GM10248 (cell line): ENCODE measurements at regions of chr1 and their contacts with region 1.

Region 1: GRCh38 chr1:183580281-183580682 is 10.0 kb downstream of the NCF2 start:
- DNase-seq: peak; percentile 49
- CTCF ChIP-seq: peak; percentile 27

Region 2: DNA sequence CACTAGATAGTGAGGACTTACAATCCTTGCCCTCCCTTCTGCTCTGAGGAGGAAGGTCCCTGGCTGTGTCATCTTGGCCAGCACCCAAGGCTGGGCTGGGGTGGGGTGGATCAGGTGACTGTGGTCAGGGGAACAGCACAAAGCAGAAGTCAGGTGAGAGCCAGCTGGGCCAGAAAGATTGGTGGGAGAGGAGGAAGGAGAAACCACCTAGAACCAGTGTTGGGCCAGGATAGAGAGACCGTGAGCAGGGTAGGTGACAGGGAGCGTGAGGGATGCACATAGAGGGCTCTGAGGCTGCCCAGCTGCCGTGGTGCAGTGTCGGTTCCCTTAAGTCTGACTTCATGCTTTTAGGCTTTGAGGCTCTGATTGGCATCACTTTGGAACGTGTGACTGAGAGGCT is 12.7 kb before region 1 on chr1:
- CTCF ChIA-PET with region 1: interaction called, 17 read pairs
- POLR2A ChIA-PET with region 1: no interaction called
- DNase-seq: peak; percentile 44
- CTCF ChIP-seq: no peak

Region 3: DNA sequence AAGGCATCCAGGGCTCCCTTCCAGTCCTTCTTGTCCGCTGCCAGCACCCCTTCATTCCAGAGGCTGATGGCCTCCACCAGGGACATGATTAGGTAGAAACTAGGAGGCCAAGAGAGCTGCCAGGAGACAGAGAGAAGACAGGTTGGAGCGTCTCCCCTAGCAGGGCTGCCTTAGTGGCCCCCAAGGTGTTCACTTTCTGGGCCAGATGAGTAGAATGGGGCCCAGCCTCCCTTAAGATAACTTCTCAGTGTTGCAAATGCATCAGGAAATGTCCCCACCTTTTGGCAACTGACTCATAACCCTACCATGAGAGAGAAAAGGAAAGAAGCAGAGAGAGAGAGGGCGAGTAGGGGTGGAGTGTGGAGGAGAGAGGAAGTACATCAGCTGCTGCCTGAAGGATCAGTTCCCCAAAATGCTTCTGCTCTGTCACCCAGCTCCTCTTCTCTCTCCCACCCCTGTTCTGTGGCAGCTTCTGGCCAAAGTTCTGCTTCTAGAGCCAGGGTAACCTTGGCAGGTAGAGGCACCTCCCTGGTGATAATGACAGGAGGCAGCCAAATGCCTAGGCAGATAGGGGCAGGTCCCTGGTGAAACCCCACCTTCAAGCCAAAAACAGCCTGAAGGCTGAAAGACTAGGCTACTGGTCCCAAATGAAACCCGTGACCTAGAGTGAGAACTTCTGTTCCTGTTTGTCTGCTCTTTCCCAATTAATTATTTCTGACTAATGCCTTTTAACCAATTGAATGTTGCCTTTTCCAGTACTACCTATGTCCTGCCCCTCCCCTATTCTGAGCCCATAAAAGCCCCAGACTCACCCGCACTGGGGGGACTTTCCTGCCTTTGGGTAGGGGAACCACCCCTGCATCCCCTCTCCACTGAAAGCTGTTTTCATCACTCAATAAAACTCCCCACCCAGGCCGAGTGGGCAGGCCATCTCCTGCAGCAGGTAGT is 10.2 kb after region 1 on chr1 and contains the start of gene NCF2:
- CTCF ChIA-PET with region 1: interaction called, 26 read pairs
- POLR2A ChIA-PET with region 1: no interaction called
- DNase-seq: peak; percentile 83
- CTCF ChIP-seq: peak; percentile 15

Region 4: GRCh38 chr1:183739741-183740271 is 159.5 kb after region 1 on chr1:
- CTCF ChIA-PET with region 1: no interaction called
- POLR2A ChIA-PET with region 1: no interaction called
- DNase-seq: no peak
- CTCF ChIP-seq: no peak